ENCODE measurements at regions of chr6 and their contacts with region 1.

Region 1: DNA sequence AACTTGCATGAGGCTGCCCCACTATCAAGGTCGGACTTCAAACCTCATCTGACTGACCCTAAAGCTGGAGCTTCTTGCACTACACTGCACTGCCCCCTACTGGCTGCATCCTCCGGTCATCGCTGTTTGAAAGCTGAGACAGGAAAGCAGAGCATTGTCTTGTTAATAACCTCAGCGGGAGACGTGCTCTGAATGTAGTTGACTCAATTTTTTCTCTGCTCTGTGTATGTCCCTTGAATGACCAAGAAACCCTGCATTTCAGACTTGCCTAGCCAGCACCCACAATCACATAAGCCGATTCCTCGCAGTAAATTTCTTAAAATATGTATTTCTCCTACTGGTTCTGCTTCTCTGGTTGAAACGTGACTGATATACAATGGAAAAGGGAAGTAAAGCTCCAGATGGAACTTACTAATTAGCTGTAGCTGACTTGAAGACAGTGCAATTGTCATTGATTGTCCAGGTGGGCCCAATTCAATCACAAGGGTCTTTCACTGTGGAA is 27.8 kb downstream of the TCF21 start:
- DNase-seq: peak; percentile 71
- H3K4me3 ChIP-seq: no peak overlapping the region
- CTCF ChIP-seq: peak; percentile 91

Region 2: DNA sequence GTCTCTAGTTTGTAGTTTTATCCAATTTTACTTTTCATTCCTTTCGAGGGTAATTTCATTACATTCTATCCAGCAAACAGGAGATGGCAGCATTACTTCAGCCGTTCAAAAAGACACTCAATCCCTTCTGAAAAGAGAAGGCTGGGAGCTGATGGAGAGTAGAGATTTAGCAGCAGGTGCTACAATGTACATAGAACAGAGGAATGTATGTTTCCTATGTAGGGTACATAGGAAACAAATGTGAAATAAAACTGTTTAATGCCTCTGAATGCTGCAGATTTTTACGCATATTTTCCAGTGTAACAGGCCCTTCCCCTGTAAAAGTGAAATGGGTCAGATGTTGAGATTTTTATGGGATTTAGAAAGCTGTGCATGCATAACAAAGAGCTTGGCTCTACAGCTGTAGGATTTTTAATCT is 1086.4 kb before region 1 on chr6:
- CTCF ChIA-PET with region 1: interaction called, 10 read pairs
- POLR2A ChIA-PET with region 1: no interaction called
- DNase-seq: no peak
- H3K4me3 ChIP-seq: no peak overlapping the region
- CTCF ChIP-seq: peak; percentile 17

Region 3: GRCh38 chr6:133184798-133185372 is 731.8 kb before region 1 on chr6:
- CTCF ChIA-PET with region 1: interaction called, 24 read pairs
- POLR2A ChIA-PET with region 1: no interaction called
- DNase-seq: peak; percentile 3
- H3K4me3 ChIP-seq: no peak overlapping the region
- CTCF ChIP-seq: peak; percentile 22

Region 4: GRCh38 chr6:133559926-133560325 is 356.8 kb before region 1 on chr6:
- CTCF ChIA-PET with region 1: interaction called, 10 read pairs
- POLR2A ChIA-PET with region 1: no interaction called
- DNase-seq: no peak
- H3K4me3 ChIP-seq: no peak overlapping the region
- CTCF ChIP-seq: no peak

Region 5: GRCh38 chr6:133837801-133838349 is 78.8 kb before region 1 on chr6:
- CTCF ChIA-PET with region 1: interaction called, 221 read pairs
- POLR2A ChIA-PET with region 1: no interaction called
- DNase-seq: no peak
- H3K4me3 ChIP-seq: peak overlapping the region; percentile 50
- CTCF ChIP-seq: peak; percentile 63

Region 6: DNA sequence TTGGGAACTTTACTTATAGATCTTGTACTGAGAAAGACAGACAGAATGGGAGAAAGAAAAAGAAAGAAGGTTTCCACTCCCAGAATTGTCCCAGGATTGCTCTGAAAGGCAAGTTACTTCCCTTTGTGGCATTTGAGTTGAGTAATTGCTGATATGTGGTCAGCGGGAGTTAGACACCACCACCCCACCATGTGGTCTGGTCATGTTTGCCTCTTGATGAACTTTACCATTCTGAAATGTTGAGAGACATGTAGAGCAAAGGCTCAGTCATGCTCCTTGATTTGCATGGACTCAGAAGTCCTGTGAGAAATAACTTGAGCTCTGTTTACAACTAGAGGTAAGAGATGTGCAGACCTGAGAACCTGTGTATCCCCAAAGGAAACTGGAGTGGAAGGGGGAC is 10.7 kb before region 1 on chr6:
- CTCF ChIA-PET with region 1: interaction called, 29 read pairs
- POLR2A ChIA-PET with region 1: no interaction called
- DNase-seq: no peak
- H3K4me3 ChIP-seq: no peak overlapping the region
- CTCF ChIP-seq: no peak

Measured in AG04449 (cell line).